Psoas muscle (tissue), 8 donors: ENCODE measurements at regions of chr17 and their contacts with region 1.

Region 1: DNA sequence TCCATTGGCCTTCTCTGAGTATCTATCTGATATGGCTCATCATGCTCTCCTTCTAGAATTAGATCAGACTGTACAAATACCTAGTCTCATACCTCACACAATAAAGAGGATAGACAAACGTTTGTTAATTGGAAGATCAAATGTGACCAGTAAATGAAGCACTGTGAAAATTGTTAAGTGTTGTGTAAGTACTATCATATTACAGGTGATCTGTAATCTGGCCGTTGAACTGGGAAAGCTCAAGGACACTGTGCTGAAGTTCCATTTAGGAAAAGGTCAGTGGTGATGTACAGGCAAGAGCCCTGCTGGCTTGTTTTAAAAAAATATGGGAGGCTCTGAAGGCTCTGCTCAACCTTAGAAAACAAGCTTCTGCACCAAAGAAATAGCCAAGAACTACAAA is 38.5 kb upstream of the CORO6 start:
- DNase-seq: no peak
- ATAC-seq: peak; percentile 43 to 62 (median 58)
- H3K4me3 ChIP-seq: no peak overlapping the region
- H3K27ac ChIP-seq: peak overlapping the region; percentile 88
- H3K4me1 ChIP-seq: peaks cover 54% of the 10 kb centered on the region
- H3K27me3 ChIP-seq: no peaks in the 10 kb centered on the region
- CTCF ChIP-seq: no peak

Region 2: GRCh38 chr17:29645515-29646051 is 15.6 kb before region 1 on chr17:
- intact Hi-C with region 1: loop called in 1 of 2 experiments (anchors 2 kb)
- DNase-seq: peak; percentile 83 to 90
- ATAC-seq: peak in 3 of 4 donors; percentile 61 to 71 (median 63)
- H3K4me3 ChIP-seq: no peak overlapping the region
- H3K27ac ChIP-seq: peak overlapping the region; percentile 94
- H3K4me1 ChIP-seq: peaks cover 59% of the 10 kb centered on the region
- H3K27me3 ChIP-seq: no peaks in the 10 kb centered on the region
- CTCF ChIP-seq: no peak

Region 3: GRCh38 chr17:29855686-29856085 is 194.5 kb after region 1 on chr17:
- intact Hi-C with region 1: no loop called
- DNase-seq: no peak
- ATAC-seq: peak in 1 of 4 donors; percentile 26
- H3K4me3 ChIP-seq: no peak overlapping the region
- H3K27ac ChIP-seq: no peak overlapping the region
- H3K4me1 ChIP-seq: peaks cover 3% of the 10 kb centered on the region
- H3K27me3 ChIP-seq: no peaks in the 10 kb centered on the region
- CTCF ChIP-seq: no peak